AG04449 (cell line): ENCODE measurements at regions of chr2 and their contacts with region 1.

Region 1: DNA sequence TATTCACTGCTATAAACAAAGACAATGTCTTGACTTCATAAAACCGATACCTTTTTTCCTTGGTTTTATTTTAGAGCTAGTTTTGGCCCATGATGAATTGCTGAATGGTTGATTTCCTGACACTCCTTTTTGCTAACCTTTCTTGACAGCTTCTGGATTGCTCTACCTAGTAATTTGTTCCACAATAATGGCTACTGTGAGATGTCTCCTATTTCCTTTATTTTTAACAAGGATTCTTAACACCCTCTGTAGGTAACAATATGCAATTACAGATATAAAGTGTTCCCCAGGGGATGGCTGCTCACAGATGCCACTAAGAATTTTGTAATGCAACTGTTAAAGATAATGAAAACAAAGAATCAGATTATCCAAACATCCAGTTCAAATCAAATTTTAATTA is 100.8 kb upstream of the ATP5MC3 start:
- DNase-seq: no peak
- H3K4me3 ChIP-seq: no peak overlapping the region
- CTCF ChIP-seq: peak; percentile 22

Region 2: DNA sequence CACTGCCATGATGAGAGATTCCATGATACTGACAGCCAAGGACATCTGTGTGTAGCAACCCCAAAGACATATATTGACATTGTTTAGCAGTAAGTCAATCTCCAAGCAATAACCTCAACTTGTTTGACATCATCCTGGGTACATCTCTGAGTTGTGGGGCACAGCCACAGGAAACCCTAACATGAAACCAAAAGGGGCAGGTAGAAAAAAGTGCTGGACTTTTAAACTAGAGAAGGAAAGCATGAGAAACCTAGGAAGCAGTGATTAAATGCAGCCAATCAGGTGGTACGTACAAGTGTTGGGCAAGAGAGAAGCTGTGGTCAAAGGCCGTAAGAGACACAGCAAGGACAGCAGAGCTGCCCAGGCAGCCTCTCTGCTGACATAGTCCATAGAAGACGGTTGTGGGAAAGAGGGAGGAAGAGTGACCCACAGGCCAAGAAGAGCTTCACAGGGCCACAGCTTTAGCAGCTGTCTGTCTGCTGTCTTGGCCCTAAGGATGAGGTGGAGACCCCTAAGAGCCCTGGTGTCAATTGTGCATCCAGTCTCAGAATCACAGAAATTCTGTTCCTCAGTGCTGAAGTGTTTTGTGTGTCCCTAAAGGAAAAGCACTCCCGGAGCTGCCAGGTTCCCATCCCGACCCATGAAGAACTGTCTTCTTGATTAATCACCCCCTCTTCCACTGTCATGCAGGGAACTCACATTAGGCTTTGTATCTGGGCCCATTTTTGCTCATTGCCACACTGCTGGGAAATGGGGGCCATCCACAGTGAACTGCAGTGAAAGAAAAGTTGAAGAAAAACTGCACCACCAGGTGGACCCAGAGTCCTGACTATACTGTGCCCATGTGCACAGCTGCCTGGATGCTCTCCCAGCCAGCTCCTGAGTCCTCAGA is 251.7 kb before region 1 on chr2:
- CTCF ChIA-PET with region 1: interaction called, 25 read pairs
- POLR2A ChIA-PET with region 1: no interaction called
- DNase-seq: peak; percentile 3
- H3K4me3 ChIP-seq: no peak overlapping the region
- CTCF ChIP-seq: peak; percentile 50

Region 3: GRCh38 chr2:175203621-175204496 is 78.4 kb before region 1 on chr2:
- CTCF ChIA-PET with region 1: interaction called, 11 read pairs
- POLR2A ChIA-PET with region 1: no interaction called
- DNase-seq: no peak
- H3K4me3 ChIP-seq: no peak overlapping the region
- CTCF ChIP-seq: peak; percentile 66

Region 4: GRCh38 chr2:175251425-175252041 is 30.8 kb before region 1 on chr2:
- CTCF ChIA-PET with region 1: interaction called, 26 read pairs
- POLR2A ChIA-PET with region 1: no interaction called
- DNase-seq: no peak
- H3K4me3 ChIP-seq: no peak overlapping the region
- CTCF ChIP-seq: peak; percentile 60